Activated CD4-positive, alpha-beta T cell treated with anti-CD3 and anti-CD28 coated beads for 36 hours (primary cell): ENCODE measurements at regions of chr16 and their contacts with region 1.

Region 1: DNA sequence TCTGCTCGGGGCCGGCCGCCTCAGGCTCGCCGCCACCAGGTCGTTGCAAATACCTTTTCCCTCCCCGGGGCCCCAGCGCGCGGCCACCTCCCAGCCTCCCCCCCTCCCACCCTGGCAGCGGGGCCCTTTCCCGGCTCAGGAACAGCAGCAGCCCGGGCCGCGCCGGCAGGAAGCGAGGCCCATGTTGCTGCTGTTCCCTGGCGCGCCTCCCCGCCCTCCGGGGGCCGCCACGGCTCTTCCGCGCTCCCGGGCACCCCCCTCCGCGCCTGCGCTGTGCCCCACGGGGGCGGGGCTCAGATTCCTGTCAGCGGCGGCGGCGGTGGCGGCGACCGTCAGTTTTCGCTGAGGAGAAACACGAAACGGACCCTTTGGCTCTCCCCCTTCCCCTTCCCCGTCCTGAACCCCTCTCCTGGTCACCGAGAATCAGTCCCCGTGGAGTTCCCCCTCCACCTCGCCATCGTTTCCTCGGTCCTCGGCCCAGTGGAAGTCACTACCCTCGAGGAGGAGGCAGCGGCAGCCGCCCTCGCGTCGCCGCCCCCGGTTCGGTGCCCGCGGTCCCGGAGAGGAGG is at the start of gene NFAT5:
- DNase-seq: peak; percentile 94
- ATAC-seq: peak; percentile 25
- H3K4me3 Mint-ChIP-seq: peak within 1 kb of the TSS; percentile 99
- H3K27ac Mint-ChIP-seq: peak within 1 kb of the TSS; percentile 99
- H3K4me1 Mint-ChIP-seq: peaks cover 54% of the 10 kb centered on the region
- H3K27me3 Mint-ChIP-seq: no peaks in the 10 kb centered on the region
- total RNA-seq, gene NFAT5: 29.6 to 37.9 TPM

Region 2: DNA sequence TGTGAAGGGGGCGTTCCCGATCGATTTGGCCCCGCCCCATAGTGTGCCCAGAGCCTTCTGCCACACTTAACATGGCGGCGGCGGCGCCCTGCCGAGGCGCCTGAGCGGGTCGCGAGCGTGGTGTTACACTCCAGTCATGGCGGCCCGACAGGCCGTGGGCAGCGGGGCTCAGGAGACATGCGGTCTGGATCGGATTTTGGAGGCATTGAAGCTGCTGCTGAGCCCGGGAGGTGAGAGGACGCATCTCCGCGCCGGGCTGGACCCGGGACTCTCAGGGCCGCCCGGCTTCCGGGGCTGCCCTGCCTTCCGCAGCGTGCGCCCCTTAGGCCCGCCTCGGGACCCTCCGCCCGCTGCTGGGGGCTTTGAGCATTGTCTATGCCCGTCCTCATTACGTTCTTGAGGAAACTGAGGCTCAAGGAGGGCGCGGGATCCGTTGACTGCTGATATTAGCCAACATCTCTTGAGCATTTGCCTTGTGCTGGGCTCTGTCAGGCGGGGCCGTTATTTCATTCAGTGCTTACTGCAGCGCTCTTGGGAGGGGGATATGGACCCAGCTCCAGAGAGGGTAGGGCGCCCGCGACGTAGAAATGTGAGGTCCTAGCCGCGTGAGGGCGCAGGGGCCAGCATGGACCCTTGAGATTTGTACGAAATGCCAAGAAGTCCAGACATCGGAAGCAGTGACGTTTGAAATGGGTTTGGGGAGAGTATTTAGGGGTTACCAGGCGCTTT is 722.1 kb before region 1 on chr16 and contains the start of gene TANGO6:
- CTCF ChIA-PET with region 1: no interaction called
- POLR2A ChIA-PET with region 1: no interaction called
- intact Hi-C with region 1: loop called in 1 of 2 experiments (anchors 2 kb)
- DNase-seq: peak; percentile 95
- ATAC-seq: peak; percentile 93
- H3K4me3 Mint-ChIP-seq: peak within 1 kb of the TSS; percentile 84
- H3K27ac Mint-ChIP-seq: peak within 1 kb of the TSS; percentile 91
- H3K4me1 Mint-ChIP-seq: peaks cover 27% of the 10 kb centered on the region
- H3K27me3 Mint-ChIP-seq: no peaks in the 10 kb centered on the region
- total RNA-seq, gene TANGO6: 29.7 to 31.2 TPM

Region 3: DNA sequence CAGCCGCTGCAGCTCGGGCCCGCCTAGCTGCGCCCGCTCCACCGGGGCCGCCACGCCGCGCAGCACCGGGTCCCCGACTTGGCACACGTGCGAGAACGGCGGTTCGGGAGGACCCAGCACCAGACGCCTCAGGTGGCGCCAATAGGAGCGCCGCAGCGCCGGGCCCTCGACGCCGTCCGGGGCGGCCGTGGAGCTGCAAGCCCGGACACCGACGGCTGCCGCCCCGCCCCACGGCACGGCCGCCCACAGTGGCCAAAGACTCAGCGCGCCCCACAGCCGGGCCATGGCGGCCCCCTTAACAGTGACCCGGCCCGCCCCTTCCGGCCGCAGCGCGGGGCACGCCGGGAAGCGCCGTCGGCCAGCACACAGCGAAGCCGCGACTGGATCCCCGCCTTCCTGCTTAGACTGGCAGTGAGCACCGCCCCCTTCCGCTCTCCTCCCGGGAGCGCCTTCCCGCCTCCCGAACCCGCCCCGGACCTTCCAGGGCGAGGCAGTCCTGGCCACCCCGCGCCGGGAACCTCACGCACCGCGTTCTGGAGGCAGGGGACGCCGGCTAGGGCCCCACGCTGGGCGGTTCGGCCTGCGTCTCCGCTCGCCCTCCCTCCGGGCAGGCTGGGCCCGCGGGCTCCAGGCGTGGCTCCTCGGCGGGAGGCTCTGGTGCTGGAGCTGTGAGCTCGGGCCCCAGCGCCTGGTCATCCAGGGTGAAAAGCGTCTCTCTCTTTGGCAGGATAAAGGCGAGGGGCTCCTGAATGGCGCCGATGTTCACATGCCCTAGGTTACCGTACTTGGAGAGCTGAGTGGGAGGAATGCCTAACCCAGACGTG is 235.3 kb before region 1 on chr16 and contains the start of gene PDF:
- CTCF ChIA-PET with region 1: no interaction called
- POLR2A ChIA-PET with region 1: no interaction called
- intact Hi-C with region 1: loop called (anchors 2 to 10 kb)
- DNase-seq: peak; percentile 90
- ATAC-seq: peak; percentile 94
- H3K4me3 Mint-ChIP-seq: peak within 1 kb of the TSS; percentile 83
- H3K27ac Mint-ChIP-seq: peak within 1 kb of the TSS; percentile 84
- H3K4me1 Mint-ChIP-seq: peaks cover 45% of the 10 kb centered on the region
- H3K27me3 Mint-ChIP-seq: no peaks in the 10 kb centered on the region
- total RNA-seq, gene PDF: 10.1 to 19.9 TPM

Region 4: GRCh38 chr16:69424053-69424934 is 141.5 kb before region 1 on chr16 and contains the start of gene CYB5B:
- CTCF ChIA-PET with region 1: no interaction called
- POLR2A ChIA-PET with region 1: interaction called, 3 read pairs
- intact Hi-C with region 1: loop called (anchors 1 kb)
- DNase-seq: peak; percentile 98
- ATAC-seq: peak; percentile 97
- H3K4me3 Mint-ChIP-seq: peak within 1 kb of the TSS; percentile 96
- H3K27ac Mint-ChIP-seq: peak within 1 kb of the TSS; percentile 93
- H3K4me1 Mint-ChIP-seq: peaks cover 35% of the 10 kb centered on the region
- H3K27me3 Mint-ChIP-seq: no peaks in the 10 kb centered on the region
- total RNA-seq, gene CYB5B: 158 to 187 TPM

Region 5: DNA sequence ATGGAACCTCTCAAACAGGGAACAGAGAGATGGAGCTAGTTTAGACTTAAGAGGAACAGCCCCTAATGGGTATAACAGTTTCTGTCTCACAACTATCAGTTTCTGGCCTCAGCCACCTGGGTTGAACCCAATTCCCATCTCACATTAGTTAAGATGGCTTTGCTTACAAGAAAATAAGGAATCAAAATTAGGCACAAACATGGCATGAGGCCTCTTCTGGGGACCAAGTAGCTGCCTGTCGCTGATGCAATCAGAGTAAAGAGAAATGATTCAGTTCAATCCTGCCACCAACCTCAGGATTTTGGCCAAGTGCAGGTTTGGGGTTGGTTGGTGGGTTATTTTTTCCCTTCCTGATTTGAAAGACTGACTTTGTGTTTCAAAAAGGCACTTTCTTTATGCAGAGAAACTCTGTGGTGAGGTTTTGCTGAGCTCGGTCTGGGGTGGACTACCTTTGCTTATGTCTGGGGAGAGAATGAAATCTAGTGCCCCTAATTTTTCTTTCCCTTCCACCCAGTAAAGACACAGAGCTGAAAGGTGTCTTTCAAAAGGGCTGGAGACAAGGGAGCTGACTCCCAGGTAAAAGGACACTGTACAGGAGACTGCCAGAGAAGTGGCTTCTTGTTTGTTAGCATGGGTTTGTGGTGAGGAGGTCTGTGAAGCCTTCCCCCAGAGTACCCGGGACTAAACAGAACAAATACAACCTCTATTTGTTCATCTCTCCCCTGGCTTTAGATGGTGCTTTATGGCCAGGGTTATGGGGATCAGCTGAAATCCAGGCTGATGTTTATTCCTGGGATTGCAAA is 44.8 kb before region 1 on chr16:
- CTCF ChIA-PET with region 1: interaction called, 3 read pairs
- POLR2A ChIA-PET with region 1: interaction called, 5 read pairs
- intact Hi-C with region 1: loop called (anchors 1 to 5 kb)
- DNase-seq: peak; percentile 71
- ATAC-seq: peak; percentile 83
- H3K4me3 Mint-ChIP-seq: peak overlapping the region; percentile 7
- H3K27ac Mint-ChIP-seq: peak overlapping the region; percentile 85
- H3K4me1 Mint-ChIP-seq: peaks cover 26% of the 10 kb centered on the region
- H3K27me3 Mint-ChIP-seq: no peaks in the 10 kb centered on the region

Region 6: DNA sequence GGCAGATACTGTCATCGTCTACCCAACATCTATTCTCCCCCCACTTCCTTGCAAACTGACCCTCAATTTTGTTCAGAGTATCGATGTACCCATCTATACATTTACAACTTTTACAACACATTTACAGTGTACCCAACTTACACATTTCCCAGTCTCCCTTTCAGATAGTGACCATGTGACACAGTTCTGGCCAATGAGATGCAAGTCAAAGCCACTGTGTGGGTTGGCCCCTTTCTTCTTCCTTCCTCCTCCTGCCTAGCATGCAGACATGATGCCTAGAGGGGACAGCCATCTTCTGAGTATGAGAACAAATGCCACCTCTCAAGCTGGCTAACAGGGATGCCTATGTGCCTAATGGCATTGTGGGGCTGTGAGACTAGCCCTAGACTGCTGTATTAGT is 11.3 kb before region 1 on chr16:
- CTCF ChIA-PET with region 1: no interaction called
- POLR2A ChIA-PET with region 1: no interaction called
- intact Hi-C with region 1: no loop called
- DNase-seq: peak; percentile 27
- ATAC-seq: peak; percentile 72
- H3K4me3 Mint-ChIP-seq: no peak overlapping the region
- H3K27ac Mint-ChIP-seq: no peak overlapping the region
- H3K4me1 Mint-ChIP-seq: peaks cover 17% of the 10 kb centered on the region
- H3K27me3 Mint-ChIP-seq: no peaks in the 10 kb centered on the region

Region 7: GRCh38 chr16:69754469-69755310 is 188.9 kb after region 1 on chr16 and contains the start of gene NOB1:
- CTCF ChIA-PET with region 1: interaction called, 3 read pairs
- POLR2A ChIA-PET with region 1: no interaction called
- intact Hi-C with region 1: loop called in 1 of 2 experiments (anchors 2 kb)
- DNase-seq: peak; percentile 99
- ATAC-seq: peak; percentile 98
- H3K4me3 Mint-ChIP-seq: peak within 1 kb of the TSS; percentile 96
- H3K27ac Mint-ChIP-seq: peak within 1 kb of the TSS; percentile 98
- H3K4me1 Mint-ChIP-seq: peaks cover 21% of the 10 kb centered on the region
- H3K27me3 Mint-ChIP-seq: no peaks in the 10 kb centered on the region
- total RNA-seq, gene NOB1: 109 to 112 TPM